Heart left ventricle (tissue), 16 donors: ENCODE measurements at regions of chr12 and their contacts with region 1.

Region 1: GRCh38 chr12:27583057-27583797 is 59.2 kb downstream of the PPFIBP1 start:
- DNase-seq: peak in 1 of 5 donors; percentile 43
- ATAC-seq: peak; percentile 70 to 83 (median 74)
- H3K4me3 ChIP-seq: no peak overlapping the region
- H3K27ac ChIP-seq: peak overlapping the region; percentile 49 to 85 (median 75)
- H3K4me1 ChIP-seq: peaks cover 12 to 87% (median 65%) of the 10 kb centered on the region in 12 donors
- H3K27me3 ChIP-seq: no peaks in the 10 kb centered on the region
- CTCF ChIP-seq: no peak
- POLR2A ChIP-seq: no peak

Region 2: DNA sequence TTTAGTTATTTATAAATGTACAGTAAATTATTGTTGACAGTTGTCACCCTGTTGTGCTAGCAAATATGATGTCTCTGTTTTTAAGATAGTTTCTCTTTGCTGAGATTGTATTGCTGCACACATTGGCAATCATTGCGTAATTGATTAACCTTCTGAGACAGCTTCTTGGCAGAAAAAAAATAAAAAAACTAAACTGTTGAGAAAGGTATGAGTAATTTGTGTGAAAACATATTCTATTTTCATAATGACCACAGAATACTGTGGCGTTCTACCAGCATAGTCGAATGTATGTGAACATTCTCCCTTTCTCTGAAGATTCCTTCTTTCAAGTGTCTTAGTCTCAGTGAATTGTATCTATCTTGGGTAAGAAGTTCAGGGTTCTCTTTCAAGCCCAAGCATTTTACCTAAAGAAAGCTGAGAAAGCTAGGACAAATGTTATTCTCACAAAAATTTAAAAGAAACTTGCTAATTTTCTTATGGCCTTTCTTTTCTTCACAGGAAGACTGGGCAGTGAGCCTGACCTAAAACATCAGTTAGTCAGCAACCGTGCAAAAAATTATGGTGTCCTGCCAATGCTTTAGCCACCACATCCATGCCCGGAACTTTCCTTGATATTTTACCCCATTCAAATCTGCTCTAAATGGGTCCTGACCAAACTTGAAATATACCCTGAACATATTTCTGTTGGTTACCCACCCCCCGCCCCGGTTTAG is 44.1 kb after region 1 on chr12:
- intact Hi-C with region 1: loop called in 1 of 10 experiments (anchors 5 kb)
- DNase-seq: no peak
- ATAC-seq: peak in 1 of 4 donors; percentile 50
- H3K4me3 ChIP-seq: no peak overlapping the region
- H3K27ac ChIP-seq: peak overlapping the region in 6 of 12 donors; percentile 11 to 58 (median 28)
- H3K4me1 ChIP-seq: peaks cover 0 to 65% (median 36%) of the 10 kb centered on the region in 12 donors
- H3K27me3 ChIP-seq: no peaks in the 10 kb centered on the region
- CTCF ChIP-seq: no peak
- POLR2A ChIP-seq: no peak

Region 3: GRCh38 chr12:27733052-27733656 is 149.9 kb after region 1 on chr12:
- intact Hi-C with region 1: no loop called
- DNase-seq: no peak
- ATAC-seq: peak in 3 of 4 donors; percentile 37 to 64 (median 48)
- H3K4me3 ChIP-seq: no peak overlapping the region
- H3K27ac ChIP-seq: no peak overlapping the region
- H3K4me1 ChIP-seq: no peaks in the 10 kb centered on the region
- H3K27me3 ChIP-seq: no peaks in the 10 kb centered on the region
- CTCF ChIP-seq: peak; percentile 34 to 87 (median 73)
- POLR2A ChIP-seq: no peak